ENCODE measurements at regions of chr3 and their contacts with region 1.

Region 1: DNA sequence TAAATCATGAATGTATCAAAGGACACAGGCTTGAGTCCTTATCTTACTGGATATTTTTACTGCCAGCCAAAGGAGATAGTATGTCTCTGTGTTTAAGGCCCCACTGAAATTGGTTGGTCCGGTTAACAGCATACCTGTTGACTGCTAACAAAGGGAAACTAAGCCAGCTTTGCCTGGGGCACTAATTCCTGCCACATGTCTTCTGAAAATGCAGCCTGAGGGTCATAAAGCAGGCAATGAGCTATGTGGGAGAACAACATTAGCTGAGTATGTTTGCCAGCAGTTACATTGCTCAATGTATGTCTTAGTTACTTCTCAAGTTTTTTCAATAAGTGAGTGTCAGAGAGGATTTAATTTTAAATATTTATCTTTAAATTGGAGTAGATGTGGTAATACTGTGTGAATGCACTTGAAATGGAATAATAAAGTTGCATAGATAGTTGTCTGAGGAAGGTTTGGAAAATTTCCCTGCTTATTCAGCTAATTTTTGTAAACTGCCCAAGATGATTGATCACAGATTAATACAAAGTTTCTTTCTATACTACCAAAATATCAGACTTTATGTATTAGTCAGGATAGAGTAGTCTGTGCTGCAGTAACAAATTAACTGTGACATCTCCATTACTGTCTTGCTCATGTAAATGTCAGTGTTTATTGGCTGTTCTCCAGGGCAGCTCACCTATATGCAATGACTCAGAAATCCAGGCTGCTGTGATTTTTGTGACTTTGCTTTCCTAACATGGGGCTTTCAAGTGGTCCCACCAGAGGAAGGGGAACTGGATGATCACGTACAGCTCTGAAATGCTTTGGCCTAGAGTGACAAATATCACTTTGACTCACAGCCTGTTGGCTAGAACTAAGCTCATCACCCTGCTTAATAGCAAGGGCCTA is 12.7 kb downstream of the PLS1 start:
- DNase-seq: no peak
- ATAC-seq: peak; percentile 44
- H3K4me3 Mint-ChIP-seq: no peak overlapping the region
- H3K27ac Mint-ChIP-seq: no peak overlapping the region
- H3K4me1 Mint-ChIP-seq: no peaks in the 10 kb centered on the region
- H3K27me3 Mint-ChIP-seq: no peaks in the 10 kb centered on the region

Region 2: DNA sequence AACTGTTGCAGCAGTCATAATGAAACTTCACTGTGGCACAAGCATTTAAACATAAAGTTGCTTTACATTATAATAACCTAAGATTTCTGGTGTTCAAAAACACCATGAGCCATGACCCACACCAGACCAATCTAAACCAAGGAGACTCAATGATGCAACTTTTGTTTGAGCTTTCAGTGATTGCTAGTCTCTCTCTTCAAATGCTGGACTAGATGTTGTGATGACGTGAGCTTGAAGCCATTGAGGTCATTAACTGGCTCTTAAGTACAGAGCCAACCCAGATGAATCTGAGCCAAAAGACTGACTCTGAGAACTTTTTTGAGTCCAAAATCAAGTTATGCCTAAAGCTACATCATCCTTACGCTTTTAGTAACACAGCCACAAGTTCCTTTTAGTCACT is 66.8 kb before region 1 on chr3:
- CTCF ChIA-PET with region 1: no interaction called
- POLR2A ChIA-PET with region 1: no interaction called
- intact Hi-C with region 1: no loop called
- DNase-seq: no peak
- ATAC-seq: no peak
- H3K4me3 Mint-ChIP-seq: no peak overlapping the region
- H3K27ac Mint-ChIP-seq: no peak overlapping the region
- H3K4me1 Mint-ChIP-seq: no peaks in the 10 kb centered on the region
- H3K27me3 Mint-ChIP-seq: no peaks in the 10 kb centered on the region

Region 3: GRCh38 chr3:142664819-142665218 is 55.9 kb after region 1 on chr3:
- CTCF ChIA-PET with region 1: no interaction called
- POLR2A ChIA-PET with region 1: no interaction called
- intact Hi-C with region 1: loop called in 1 of 2 experiments (anchors 10 kb)
- DNase-seq: no peak
- ATAC-seq: no peak
- H3K4me3 Mint-ChIP-seq: no peak overlapping the region
- H3K27ac Mint-ChIP-seq: no peak overlapping the region
- H3K4me1 Mint-ChIP-seq: no peaks in the 10 kb centered on the region
- H3K27me3 Mint-ChIP-seq: no peaks in the 10 kb centered on the region

Region 4: GRCh38 chr3:142694225-142694624 is 85.3 kb after region 1 on chr3:
- CTCF ChIA-PET with region 1: no interaction called
- POLR2A ChIA-PET with region 1: no interaction called
- intact Hi-C with region 1: no loop called
- DNase-seq: no peak
- ATAC-seq: no peak
- H3K4me3 Mint-ChIP-seq: no peak overlapping the region
- H3K27ac Mint-ChIP-seq: no peak overlapping the region
- H3K4me1 Mint-ChIP-seq: peaks cover 4% of the 10 kb centered on the region
- H3K27me3 Mint-ChIP-seq: no peaks in the 10 kb centered on the region

Region 5: GRCh38 chr3:143634991-143635390 is 1026.1 kb after region 1 on chr3:
- CTCF ChIA-PET with region 1: no interaction called
- POLR2A ChIA-PET with region 1: no interaction called
- intact Hi-C with region 1: loop called in 1 of 2 experiments (anchors 5 kb)
- DNase-seq: no peak
- ATAC-seq: no peak
- H3K4me3 Mint-ChIP-seq: no peak overlapping the region
- H3K27ac Mint-ChIP-seq: no peak overlapping the region
- H3K4me1 Mint-ChIP-seq: no peaks in the 10 kb centered on the region
- H3K27me3 Mint-ChIP-seq: no peaks in the 10 kb centered on the region